ENCODE measurements at regions of chr12 and their contacts with region 1.

Region 1: DNA sequence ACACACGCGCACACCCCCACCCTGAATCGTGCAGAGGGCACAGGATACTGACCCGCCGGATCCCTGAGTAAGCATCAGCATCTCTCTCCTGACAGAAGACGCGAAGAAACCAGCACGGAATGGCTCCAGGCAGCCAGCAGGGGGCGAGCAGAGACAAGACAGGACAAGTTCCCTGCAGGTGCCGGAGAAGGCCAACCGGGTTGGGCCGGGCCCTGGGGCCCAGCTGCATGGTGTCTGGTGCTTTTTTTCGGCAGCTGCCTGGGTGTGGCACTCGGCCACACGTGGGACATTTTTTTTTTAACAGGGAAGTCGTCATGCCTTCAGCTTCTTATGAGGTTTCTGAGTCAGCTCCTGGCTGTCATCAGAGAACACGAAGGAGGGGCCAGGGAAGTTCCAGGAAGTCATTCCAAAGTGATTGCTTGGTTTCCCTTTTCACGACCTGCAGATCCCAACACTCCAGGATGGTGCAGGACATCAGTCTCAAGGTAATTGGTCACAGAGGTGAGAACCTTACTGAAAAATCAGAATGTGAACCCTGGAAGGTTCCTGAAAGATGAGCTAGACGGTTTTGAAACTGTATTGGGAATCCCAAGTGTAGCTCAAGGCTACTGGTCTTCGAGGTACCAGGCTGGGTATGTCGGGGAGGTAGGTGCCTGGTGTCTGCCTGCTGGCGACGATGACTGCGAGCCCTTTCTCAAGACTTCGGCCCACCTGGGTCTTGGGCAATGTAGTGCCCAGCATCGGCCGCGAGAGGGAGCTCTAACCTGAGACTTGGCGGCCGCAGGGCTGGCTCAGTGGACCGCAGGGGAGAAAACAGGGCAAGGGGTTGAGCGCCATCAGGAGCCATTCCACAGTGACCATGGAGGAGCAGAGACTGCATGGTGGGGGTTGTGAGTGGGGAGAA is 190.8 kb upstream of the PRMT8 start:
- DNase-seq: peak; percentile 87 to 96 (median 92)

Region 2: GRCh38 chr12:3148366-3149000 is 151.7 kb before region 1 on chr12:
- intact Hi-C with region 1: no loop called
- DNase-seq: no peak

Region 3: GRCh38 chr12:3491938-3492792 is 192.0 kb after region 1 on chr12:
- intact Hi-C with region 1: loop called (anchors 10 kb)
- DNase-seq: peak in 41 of 42 donors; percentile 21 to 85 (median 65)

Region 4: DNA sequence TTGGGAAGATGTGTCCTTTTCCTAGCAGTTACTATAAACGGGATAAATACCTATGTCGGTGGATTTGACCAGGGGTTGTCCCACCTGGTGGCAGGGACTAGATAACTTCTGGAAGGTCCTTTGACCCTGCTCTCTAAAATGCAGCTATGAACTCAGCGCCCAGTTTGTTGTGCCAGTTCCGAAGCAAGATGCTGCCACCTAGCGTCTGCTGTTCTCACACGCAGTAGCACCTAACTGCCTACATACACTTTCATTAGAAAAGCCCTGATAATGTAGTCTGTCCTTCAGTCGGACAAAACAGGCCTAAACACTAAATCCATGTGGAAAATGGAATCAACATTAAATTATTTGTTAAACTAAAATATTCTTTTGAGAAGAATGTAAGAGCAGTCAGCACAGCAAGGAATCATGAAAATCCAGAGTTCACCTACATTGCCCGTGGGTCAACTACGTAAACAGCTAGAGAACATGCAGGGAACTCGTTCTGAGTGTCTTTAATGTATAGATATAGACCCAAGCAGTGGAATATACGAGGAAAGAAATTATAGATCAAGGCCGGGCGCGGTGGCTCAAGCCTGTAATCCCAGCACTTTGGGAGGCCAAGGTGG is 503.8 kb after region 1 on chr12:
- intact Hi-C with region 1: loop called (anchors 2 kb)
- DNase-seq: peak; percentile 58 to 91 (median 80)